Activated CD4-positive, alpha-beta memory T cell treated with anti-CD3 and anti-CD28 coated beads for 36 hours (primary cell): ENCODE measurements at regions of chr13 and their contacts with region 1.

Region 1: GRCh38 chr13:20160847-20161274 is at the start of gene GJA3:
- DNase-seq: peak; percentile 65
- H3K4me3 Mint-ChIP-seq: peak within 1 kb of the TSS; percentile 75
- H3K27ac Mint-ChIP-seq: no peak within 1 kb of the TSS
- H3K4me1 Mint-ChIP-seq: peaks cover 13% of the 10 kb centered on the region
- H3K27me3 Mint-ChIP-seq: peaks cover 46% of the 10 kb centered on the region
- total RNA-seq, gene GJA3: 0.14 to 0.29 TPM

Region 2: GRCh38 chr13:19587635-19588300 is 573.1 kb before region 1 on chr13:
- CTCF ChIA-PET with region 1: no interaction called
- POLR2A ChIA-PET with region 1: no interaction called
- intact Hi-C with region 1: loop called (anchors 5 kb)
- DNase-seq: peak; percentile 30
- H3K4me3 Mint-ChIP-seq: peak overlapping the region; percentile 68
- H3K27ac Mint-ChIP-seq: peak overlapping the region; percentile 88
- H3K4me1 Mint-ChIP-seq: peaks cover 22% of the 10 kb centered on the region
- H3K27me3 Mint-ChIP-seq: no peaks in the 10 kb centered on the region

Region 3: GRCh38 chr13:19863323-19864023 is 297.4 kb before region 1 on chr13 and contains the start of gene ZMYM5:
- CTCF ChIA-PET with region 1: no interaction called
- POLR2A ChIA-PET with region 1: no interaction called
- intact Hi-C with region 1: loop called (anchors 5 kb)
- DNase-seq: peak; percentile 98
- H3K4me3 Mint-ChIP-seq: peak within 1 kb of the TSS; percentile 95
- H3K27ac Mint-ChIP-seq: peak within 1 kb of the TSS; percentile 97
- H3K4me1 Mint-ChIP-seq: peaks cover 43% of the 10 kb centered on the region
- H3K27me3 Mint-ChIP-seq: no peaks in the 10 kb centered on the region
- total RNA-seq, gene ZMYM5: 10.0 to 11.1 TPM

Region 4: DNA sequence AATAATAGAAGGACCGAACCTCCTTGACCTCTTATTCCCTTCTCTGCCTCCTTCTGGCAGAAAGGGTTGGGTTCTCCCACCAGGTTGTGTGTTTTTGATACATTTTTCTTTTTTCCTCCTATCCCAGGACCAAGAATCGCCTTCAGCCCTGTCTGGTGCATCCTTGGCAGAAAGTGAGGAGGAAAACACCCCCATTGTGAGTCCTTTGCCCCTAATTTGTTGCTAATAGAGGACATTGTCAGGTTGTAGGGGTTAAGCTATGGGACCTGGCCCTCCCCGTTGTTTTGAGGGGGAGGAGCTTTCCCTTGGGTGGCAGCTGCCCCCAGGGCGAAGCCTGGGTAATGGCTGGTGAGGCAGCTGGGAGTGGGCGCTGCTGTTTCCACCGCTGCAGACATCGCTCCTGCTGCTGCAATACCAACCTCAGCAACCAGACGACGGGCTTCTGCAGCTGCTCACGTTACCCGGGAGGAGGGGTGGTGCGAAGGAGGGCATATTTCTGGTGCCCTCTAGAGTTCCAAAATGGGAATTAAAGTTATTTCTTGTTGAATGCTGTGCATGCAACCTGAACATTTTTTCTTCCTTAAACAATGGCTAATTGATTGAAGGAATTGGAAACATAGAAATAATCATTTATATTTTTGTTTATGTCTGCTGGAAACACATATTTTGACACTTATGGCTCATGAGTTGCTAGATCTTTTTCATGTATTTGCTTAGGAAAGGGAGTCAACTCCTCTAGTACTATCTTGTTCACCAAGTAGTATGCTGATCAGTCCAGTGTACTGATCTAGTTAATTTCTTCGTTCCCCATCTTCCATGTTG is 200.8 kb before region 1 on chr13:
- CTCF ChIA-PET with region 1: interaction called, 4 read pairs
- POLR2A ChIA-PET with region 1: no interaction called
- intact Hi-C with region 1: loop called (anchors 1 kb)
- DNase-seq: peak; percentile 93
- H3K4me3 Mint-ChIP-seq: peak overlapping the region; percentile 94
- H3K27ac Mint-ChIP-seq: peak overlapping the region; percentile 96
- H3K4me1 Mint-ChIP-seq: peaks cover 34% of the 10 kb centered on the region
- H3K27me3 Mint-ChIP-seq: no peaks in the 10 kb centered on the region

Region 5: GRCh38 chr13:20049558-20050473 is 111.0 kb before region 1 on chr13:
- CTCF ChIA-PET with region 1: no interaction called
- POLR2A ChIA-PET with region 1: no interaction called
- intact Hi-C with region 1: loop called (anchors 10 kb)
- DNase-seq: no peak
- H3K4me3 Mint-ChIP-seq: no peak overlapping the region
- H3K27ac Mint-ChIP-seq: no peak overlapping the region
- H3K4me1 Mint-ChIP-seq: peaks cover 19% of the 10 kb centered on the region
- H3K27me3 Mint-ChIP-seq: no peaks in the 10 kb centered on the region

Region 6: GRCh38 chr13:20127577-20128466 is 33.0 kb before region 1 on chr13:
- CTCF ChIA-PET with region 1: interaction called, 8 read pairs
- POLR2A ChIA-PET with region 1: interaction called, 4 read pairs
- intact Hi-C with region 1: loop called (anchors 2 kb)
- DNase-seq: peak; percentile 61
- H3K4me3 Mint-ChIP-seq: peak overlapping the region; percentile 66
- H3K27ac Mint-ChIP-seq: no peak overlapping the region
- H3K4me1 Mint-ChIP-seq: no peaks in the 10 kb centered on the region
- H3K27me3 Mint-ChIP-seq: peaks cover 17% of the 10 kb centered on the region